A549 (cell line): ENCODE measurements at regions of chr19 and their contacts with region 1.

Region 1: DNA sequence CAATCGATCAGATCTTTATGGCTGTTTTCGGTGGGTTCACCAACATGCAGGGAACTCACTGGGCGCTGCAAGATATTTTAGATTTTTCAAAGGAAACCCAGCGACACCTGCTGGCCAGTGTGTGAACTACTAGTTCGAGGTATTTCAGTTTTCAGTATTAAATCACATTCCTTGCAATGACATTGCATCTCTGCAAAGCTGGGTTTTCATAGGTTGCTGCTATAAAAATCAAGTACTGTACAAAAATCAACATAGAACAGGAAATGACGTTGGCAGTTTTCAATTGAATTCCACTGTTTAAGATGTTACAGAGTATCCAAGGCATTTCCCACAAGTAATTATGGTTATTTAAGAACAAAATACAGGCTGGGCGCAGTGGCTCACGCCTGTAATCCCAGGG is 17.6 kb downstream of the LIG1 start:
- DNase-seq: peak; percentile 81 to 82
- ATAC-seq: peak; percentile 68 to 72
- H3K4me3 ChIP-seq: no peak overlapping the region
- H3K27ac ChIP-seq: peak overlapping the region; percentile 3 to 55; a peak in 3 of 6 replicates
- H3K4me1 ChIP-seq: peaks cover 11% of the 10 kb centered on the region; the same call in 2 of the 3 replicates
- CTCF ChIP-seq: peak; percentile 97
- EP300 ChIP-seq: no peak
- POLR2A ChIP-seq: no peak
- RAD21 ChIP-seq: peak; percentile 83 to 91

Region 2: DNA sequence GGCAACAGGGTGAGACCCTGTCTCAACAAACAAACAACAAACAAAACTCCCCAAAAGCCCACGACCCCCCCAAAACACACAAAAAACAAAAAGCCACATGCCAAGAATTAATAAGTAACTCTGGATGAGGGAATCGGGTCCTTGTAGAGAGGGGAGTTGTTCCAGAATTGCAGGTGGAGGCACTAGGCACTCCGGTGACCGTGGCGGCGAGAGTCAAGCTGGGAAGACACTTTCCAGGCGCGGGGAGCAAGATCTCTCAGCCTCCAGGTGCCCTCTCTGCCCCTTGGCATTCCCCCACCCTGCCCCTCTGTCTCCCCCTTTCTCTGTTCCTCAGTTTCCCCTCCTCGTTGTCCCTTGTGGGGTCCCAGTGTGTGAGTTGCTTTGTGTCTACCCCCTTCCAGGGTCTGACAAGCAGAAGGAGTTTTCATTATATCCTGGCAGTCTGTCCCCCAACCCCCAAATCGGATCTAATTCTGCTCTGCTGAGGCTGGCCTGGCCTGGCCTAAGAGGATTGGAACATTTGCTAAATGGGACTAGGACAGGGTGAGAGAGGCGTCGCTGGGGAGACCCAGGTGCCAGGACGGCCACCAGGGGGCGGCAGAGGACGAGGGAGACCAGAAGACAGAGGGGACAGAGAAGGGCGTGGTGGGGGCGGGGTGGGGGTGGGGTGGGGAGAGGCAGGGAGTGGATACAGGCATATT is 339.1 kb before region 1 on chr19:
- CTCF ChIA-PET with region 1: no interaction called
- POLR2A ChIA-PET with region 1: no interaction called
- DNase-seq: peak; percentile 70 to 85
- ATAC-seq: peak; percentile 95 to 97
- H3K4me3 ChIP-seq: no peak overlapping the region
- H3K27ac ChIP-seq: no peak overlapping the region
- H3K4me1 ChIP-seq: no peaks in the 10 kb centered on the region; the same call in 2 of the 3 replicates
- CTCF ChIP-seq: peak; percentile 80
- EP300 ChIP-seq: no peak
- POLR2A ChIP-seq: no peak
- RAD21 ChIP-seq: peak; percentile 54 to 63

Region 3: GRCh38 chr19:47973529-47973928 is 179.0 kb before region 1 on chr19:
- CTCF ChIA-PET with region 1: interaction called, 184 read pairs
- POLR2A ChIA-PET with region 1: interaction called, 5 read pairs
- DNase-seq: no peak
- ATAC-seq: no peak
- H3K4me3 ChIP-seq: no peak overlapping the region
- H3K27ac ChIP-seq: no peak overlapping the region
- H3K4me1 ChIP-seq: no peaks in the 10 kb centered on the region
- CTCF ChIP-seq: no peak
- EP300 ChIP-seq: no peak
- POLR2A ChIP-seq: no peak
- RAD21 ChIP-seq: no peak

Region 4: GRCh38 chr19:48006762-48007161 is 145.8 kb before region 1 on chr19:
- CTCF ChIA-PET with region 1: no interaction called
- POLR2A ChIA-PET with region 1: no interaction called
- DNase-seq: peak; percentile 51 to 74
- ATAC-seq: peak in 1 of 2 experiments; percentile 42; a peak in 1 of 6 replicates
- H3K4me3 ChIP-seq: no peak overlapping the region
- H3K27ac ChIP-seq: no peak overlapping the region
- H3K4me1 ChIP-seq: no peaks in the 10 kb centered on the region
- CTCF ChIP-seq: peak; percentile 19; the same call in 2 of the 3 replicates
- EP300 ChIP-seq: no peak
- POLR2A ChIP-seq: no peak
- RAD21 ChIP-seq: no peak

Region 5: DNA sequence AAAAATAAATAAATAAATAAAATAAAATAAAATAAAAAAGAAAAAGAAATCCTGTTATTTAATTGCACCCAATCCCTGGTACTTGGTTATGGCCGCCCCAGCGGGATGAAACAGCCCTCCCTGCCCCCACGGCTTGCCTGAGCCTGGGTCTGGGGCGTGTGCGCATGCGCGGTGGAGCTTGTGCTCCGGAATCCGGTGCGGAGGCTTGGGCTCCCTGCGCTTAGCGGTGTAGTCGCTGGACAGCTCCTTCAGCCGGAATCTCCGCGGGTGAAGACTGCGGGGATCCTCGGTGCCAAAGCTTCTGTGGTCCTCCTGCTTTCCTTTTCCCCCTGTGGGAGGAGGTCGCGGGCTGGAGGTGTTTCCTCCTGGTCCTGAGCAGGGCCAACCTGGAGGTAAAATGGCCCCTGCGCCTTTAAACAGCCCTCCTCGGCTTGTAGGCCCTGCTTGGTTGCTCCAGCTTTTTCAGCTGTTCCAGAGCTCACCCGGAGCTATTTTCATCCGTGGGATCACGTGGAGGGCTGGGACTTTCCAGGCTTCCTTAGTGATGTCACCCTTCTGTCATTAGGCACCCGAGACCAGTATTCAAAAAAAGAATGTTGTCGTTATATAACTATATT is 42.1 kb before region 1 on chr19 and contains the start of gene PLA2G4C:
- CTCF ChIA-PET with region 1: interaction called, 281 read pairs
- POLR2A ChIA-PET with region 1: interaction called, 6 read pairs
- DNase-seq: peak; percentile 94 to 100
- ATAC-seq: peak; percentile 80 to 83
- H3K4me3 ChIP-seq: peak within 1 kb of the TSS; percentile 48
- H3K27ac ChIP-seq: peak within 1 kb of the TSS; percentile 87 to 92
- H3K4me1 ChIP-seq: peaks cover 15% of the 10 kb centered on the region
- CTCF ChIP-seq: no peak
- EP300 ChIP-seq: no peak
- POLR2A ChIP-seq: peak; percentile 89
- RAD21 ChIP-seq: no peak
- polyA plus RNA-seq, gene PLA2G4C: 2.1 and 2.8 TPM in 2 replicates

Region 6: DNA sequence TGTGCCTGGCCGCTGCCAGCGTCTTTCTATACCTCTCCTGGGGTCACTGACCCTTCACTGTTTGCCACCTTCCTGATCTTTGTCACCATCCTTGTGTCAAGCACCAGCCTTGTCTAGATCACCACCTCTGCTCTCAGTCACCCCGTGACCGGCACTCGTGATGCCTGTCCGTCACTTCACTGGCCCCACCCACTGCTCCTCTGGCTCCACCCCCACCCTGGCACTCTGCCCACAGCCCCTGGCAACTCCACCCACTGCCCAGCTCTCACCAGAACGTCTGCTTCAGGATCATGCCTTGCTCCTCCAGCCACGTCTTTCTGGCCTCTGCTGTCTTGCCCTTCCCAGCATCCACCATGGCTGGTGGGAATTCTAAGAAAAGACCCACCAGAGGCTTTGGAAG is 17.1 kb before region 1 on chr19:
- CTCF ChIA-PET with region 1: interaction called, 20 read pairs
- POLR2A ChIA-PET with region 1: no interaction called
- DNase-seq: peak in 1 of 2 experiments; percentile 57
- ATAC-seq: peak in 1 of 2 experiments; percentile 45; a peak in 3 of 6 replicates
- H3K4me3 ChIP-seq: no peak overlapping the region
- H3K27ac ChIP-seq: no peak overlapping the region; a peak in 1 of 6 replicates
- H3K4me1 ChIP-seq: no peaks in the 10 kb centered on the region
- CTCF ChIP-seq: no peak
- EP300 ChIP-seq: no peak
- POLR2A ChIP-seq: no peak
- RAD21 ChIP-seq: no peak

Region 7: GRCh38 chr19:48175578-48175977 is 23.0 kb after region 1 on chr19:
- CTCF ChIA-PET with region 1: interaction called, 15 read pairs
- POLR2A ChIA-PET with region 1: no interaction called
- DNase-seq: no peak
- ATAC-seq: no peak
- H3K4me3 ChIP-seq: no peak overlapping the region
- H3K27ac ChIP-seq: no peak overlapping the region
- H3K4me1 ChIP-seq: peaks cover 8% of the 10 kb centered on the region; the same call in 1 of the 3 replicates
- CTCF ChIP-seq: no peak
- EP300 ChIP-seq: no peak
- POLR2A ChIP-seq: no peak
- RAD21 ChIP-seq: no peak